ENCODE measurements at regions of chr2 and their contacts with region 1.

Region 1: GRCh38 chr2:208175069-208175839 is 11.9 kb upstream of the CRYGA start:
- DNase-seq: peak; percentile 93
- H3K4me3 ChIP-seq: no peak overlapping the region
- H3K27ac ChIP-seq: no peak overlapping the region
- H3K4me1 ChIP-seq: peaks cover 4% of the 10 kb centered on the region
- H3K27me3 ChIP-seq: no peaks in the 10 kb centered on the region
- CTCF ChIP-seq: peak; percentile 92

Region 2: DNA sequence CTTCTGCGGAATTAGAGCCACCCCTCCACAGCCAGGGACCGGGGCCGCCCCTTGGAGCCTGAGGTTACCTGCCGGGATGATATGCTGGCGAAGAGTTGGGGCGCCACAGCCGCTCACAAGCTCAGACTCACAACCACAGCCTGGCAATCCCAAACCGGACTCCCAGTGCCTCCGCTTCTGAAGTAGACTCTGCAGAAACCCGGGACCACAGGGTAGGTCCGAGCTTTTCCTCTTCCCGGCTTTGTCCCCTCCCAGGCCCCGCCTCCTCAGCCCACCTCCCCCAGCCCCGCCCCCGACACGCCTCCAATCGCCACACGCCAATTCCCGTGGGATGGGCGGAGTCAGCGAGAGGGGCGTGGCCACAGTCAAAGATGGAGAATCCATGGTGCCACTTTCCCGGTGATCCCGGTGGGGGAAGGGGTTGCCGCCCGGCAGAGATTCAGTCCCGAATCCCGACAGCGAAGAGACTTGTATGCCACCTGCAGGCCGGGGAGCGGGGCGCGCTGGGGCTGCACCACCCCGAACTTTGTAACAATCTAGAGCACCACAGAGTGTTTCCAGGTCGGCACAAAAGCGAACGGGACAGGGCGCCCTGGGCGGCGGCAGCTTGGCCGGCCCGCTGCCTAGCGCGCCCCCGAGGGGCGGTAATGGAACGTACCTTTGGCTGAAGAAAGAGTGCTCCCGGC is 79.8 kb after region 1 on chr2 and contains the start of gene IDH1:
- CTCF ChIA-PET with region 1: interaction called, 8 read pairs
- POLR2A ChIA-PET with region 1: no interaction called
- intact Hi-C with region 1: loop called (anchors 1 kb)
- DNase-seq: peak; percentile 95
- H3K4me3 ChIP-seq: peak within 1 kb of the TSS; percentile 100
- H3K27ac ChIP-seq: peak within 1 kb of the TSS; percentile 84
- H3K4me1 ChIP-seq: peaks cover 10% of the 10 kb centered on the region
- H3K27me3 ChIP-seq: no peaks in the 10 kb centered on the region
- CTCF ChIP-seq: peak; percentile 71
- total RNA-seq, gene IDH1: 191 and 196 TPM in 2 replicates

Region 3: GRCh38 chr2:208479342-208479741 is 304.1 kb after region 1 on chr2:
- CTCF ChIA-PET with region 1: no interaction called
- POLR2A ChIA-PET with region 1: no interaction called
- intact Hi-C with region 1: loop called (anchors 5 kb)
- DNase-seq: no peak
- H3K4me3 ChIP-seq: no peak overlapping the region
- H3K27ac ChIP-seq: no peak overlapping the region
- H3K4me1 ChIP-seq: no peaks in the 10 kb centered on the region
- H3K27me3 ChIP-seq: peaks cover 10% of the 10 kb centered on the region
- CTCF ChIP-seq: no peak